OCI-LY7 (cell line): ENCODE measurements at regions of chr7 and their contacts with region 1.

Region 1: GRCh38 chr7:39453743-39454355 is 112.4 kb upstream of the YAE1 start:
- DNase-seq: peak; percentile 62
- H3K4me3 ChIP-seq: no peak overlapping the region
- H3K27ac ChIP-seq: no peak overlapping the region
- H3K4me1 ChIP-seq: no peaks in the 10 kb centered on the region
- CTCF ChIP-seq: peak; percentile 92

Region 2: DNA sequence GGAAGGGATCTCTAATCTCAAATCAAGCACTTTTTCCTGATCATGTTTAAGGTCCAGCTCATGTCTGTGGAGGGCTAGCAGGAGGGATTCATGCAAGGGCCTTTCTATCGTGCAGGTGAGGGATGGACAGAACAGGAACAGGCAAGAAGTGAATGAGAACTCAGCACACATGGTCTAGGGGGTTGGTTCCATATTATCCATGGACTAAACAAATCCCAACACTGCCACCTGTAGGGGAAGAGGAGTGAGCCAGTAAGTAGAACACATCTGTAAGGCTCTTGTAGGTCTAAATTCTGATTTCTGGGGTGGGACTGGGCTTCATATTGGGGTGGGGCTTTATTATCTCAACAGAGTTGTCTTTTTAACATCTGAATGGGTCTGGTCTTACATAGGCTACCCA is 1042.4 kb before region 1 on chr7:
- CTCF ChIA-PET with region 1: interaction called, 11 read pairs
- POLR2A ChIA-PET with region 1: no interaction called
- intact Hi-C with region 1: no loop called
- DNase-seq: peak; percentile 9
- H3K4me3 ChIP-seq: no peak overlapping the region
- H3K27ac ChIP-seq: no peak overlapping the region
- H3K4me1 ChIP-seq: no peaks in the 10 kb centered on the region
- CTCF ChIP-seq: peak; percentile 59

Region 3: DNA sequence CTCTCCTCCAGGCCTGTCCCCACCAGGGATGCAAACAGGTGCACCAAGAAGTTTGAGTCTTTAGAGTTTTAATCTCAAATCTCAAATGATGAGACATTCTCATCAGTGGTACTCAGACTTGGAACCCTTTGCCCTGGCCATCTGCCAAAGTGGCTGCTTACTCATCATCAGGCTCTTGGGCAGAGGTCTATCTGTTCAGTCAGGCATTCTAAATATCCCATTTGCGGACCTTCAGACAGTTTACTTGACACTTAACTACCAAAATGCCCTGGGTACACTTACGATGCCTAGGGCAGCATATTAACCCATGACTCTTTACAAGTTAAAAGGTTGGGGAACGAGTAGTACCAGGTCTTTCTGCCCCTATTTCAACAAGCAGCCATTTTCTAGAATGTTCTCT is 51.1 kb after region 1 on chr7:
- CTCF ChIA-PET with region 1: no interaction called
- POLR2A ChIA-PET with region 1: no interaction called
- intact Hi-C with region 1: no loop called
- DNase-seq: no peak
- H3K4me3 ChIP-seq: no peak overlapping the region
- H3K27ac ChIP-seq: no peak overlapping the region
- H3K4me1 ChIP-seq: no peaks in the 10 kb centered on the region
- CTCF ChIP-seq: no peak

Region 4: DNA sequence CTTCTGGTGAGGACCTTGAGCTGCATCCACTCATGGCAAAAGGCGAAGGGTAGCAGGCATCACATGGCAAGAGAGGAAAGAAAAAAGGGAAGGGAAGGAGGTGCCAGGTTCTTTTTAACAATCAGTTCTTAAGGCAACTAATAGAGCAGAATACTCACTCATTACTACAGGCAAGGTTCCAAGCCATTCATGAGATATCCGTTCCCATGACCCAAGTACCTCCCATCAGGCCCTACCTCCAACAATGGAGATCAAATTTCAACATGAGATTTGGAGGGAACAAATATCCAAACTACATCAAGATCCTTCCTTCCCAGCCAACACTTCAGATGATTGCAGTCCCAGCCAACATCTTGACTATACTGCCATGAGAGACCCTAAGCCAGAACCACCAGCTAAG is 73.4 kb after region 1 on chr7:
- CTCF ChIA-PET with region 1: no interaction called
- POLR2A ChIA-PET with region 1: no interaction called
- intact Hi-C with region 1: loop called (anchors 5 kb)
- DNase-seq: no peak
- H3K4me3 ChIP-seq: no peak overlapping the region
- H3K27ac ChIP-seq: no peak overlapping the region
- H3K4me1 ChIP-seq: no peaks in the 10 kb centered on the region
- CTCF ChIP-seq: no peak